Breast epithelium (tissue), 4 donors: ENCODE measurements at regions of chr6 and their contacts with region 1.

Region 1: GRCh38 chr6:64421936-64422335 is 786.3 kb downstream of the PHF3 start:
- DNase-seq: no peak
- H3K4me3 ChIP-seq: no peak overlapping the region
- H3K27ac ChIP-seq: no peak overlapping the region
- H3K4me1 ChIP-seq: no peaks in the 10 kb centered on the region
- H3K27me3 ChIP-seq: no peaks in the 10 kb centered on the region
- CTCF ChIP-seq: no peak
- POLR2A ChIP-seq: no peak

Region 2: DNA sequence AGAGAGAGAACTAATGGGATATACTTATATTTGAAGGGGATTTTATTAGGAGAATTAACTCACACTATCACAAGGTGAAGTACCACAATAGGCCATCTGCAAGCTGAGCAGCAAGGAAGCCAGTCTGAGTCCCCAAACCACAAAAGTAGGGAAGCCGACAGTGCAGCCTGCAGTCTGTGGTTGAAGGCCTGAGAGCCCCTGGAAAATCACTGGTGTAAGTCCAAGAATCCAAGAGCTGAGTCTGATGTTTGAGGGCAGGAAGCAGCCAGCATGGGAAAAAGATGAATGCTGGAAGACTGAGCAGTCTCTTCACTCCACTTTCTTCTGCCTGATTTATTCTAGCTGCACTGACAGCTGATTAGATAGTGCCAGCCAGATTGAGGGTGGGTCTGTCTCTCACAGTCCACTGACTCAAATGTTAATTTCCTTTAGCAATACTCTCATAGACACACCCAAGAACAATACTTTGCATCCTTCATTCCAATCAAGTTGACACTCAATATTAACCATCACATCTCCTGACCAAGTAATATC is 37.5 kb after region 1 on chr6:
- intact Hi-C with region 1: loop called (anchors 2 kb)
- DNase-seq: no peak
- H3K4me3 ChIP-seq: no peak overlapping the region
- H3K27ac ChIP-seq: no peak overlapping the region
- H3K4me1 ChIP-seq: no peaks in the 10 kb centered on the region
- H3K27me3 ChIP-seq: no peaks in the 10 kb centered on the region
- CTCF ChIP-seq: no peak
- POLR2A ChIP-seq: no peak

Region 3: GRCh38 chr6:65161661-65162060 is 739.7 kb after region 1 on chr6:
- intact Hi-C with region 1: no loop called
- DNase-seq: no peak
- H3K4me3 ChIP-seq: no peak overlapping the region
- H3K27ac ChIP-seq: no peak overlapping the region
- H3K4me1 ChIP-seq: no peaks in the 10 kb centered on the region
- H3K27me3 ChIP-seq: no peaks in the 10 kb centered on the region
- CTCF ChIP-seq: no peak
- POLR2A ChIP-seq: no peak